Ascending aorta (tissue), 2 donors: ENCODE measurements at regions of chr14 and their contacts with region 1.

Region 1: GRCh38 chr14:100850841-100851585 is 25.1 kb downstream of the MEG3 start:
- DNase-seq: peak in 1 of 2 donors; percentile 80
- H3K4me3 ChIP-seq: no peak overlapping the region
- H3K27ac ChIP-seq: no peak overlapping the region
- H3K4me1 ChIP-seq: no peaks in the 10 kb centered on the region
- H3K27me3 ChIP-seq: no peaks in the 10 kb centered on the region
- CTCF ChIP-seq: peak; percentile 45 to 55 (median 45)

Region 2: DNA sequence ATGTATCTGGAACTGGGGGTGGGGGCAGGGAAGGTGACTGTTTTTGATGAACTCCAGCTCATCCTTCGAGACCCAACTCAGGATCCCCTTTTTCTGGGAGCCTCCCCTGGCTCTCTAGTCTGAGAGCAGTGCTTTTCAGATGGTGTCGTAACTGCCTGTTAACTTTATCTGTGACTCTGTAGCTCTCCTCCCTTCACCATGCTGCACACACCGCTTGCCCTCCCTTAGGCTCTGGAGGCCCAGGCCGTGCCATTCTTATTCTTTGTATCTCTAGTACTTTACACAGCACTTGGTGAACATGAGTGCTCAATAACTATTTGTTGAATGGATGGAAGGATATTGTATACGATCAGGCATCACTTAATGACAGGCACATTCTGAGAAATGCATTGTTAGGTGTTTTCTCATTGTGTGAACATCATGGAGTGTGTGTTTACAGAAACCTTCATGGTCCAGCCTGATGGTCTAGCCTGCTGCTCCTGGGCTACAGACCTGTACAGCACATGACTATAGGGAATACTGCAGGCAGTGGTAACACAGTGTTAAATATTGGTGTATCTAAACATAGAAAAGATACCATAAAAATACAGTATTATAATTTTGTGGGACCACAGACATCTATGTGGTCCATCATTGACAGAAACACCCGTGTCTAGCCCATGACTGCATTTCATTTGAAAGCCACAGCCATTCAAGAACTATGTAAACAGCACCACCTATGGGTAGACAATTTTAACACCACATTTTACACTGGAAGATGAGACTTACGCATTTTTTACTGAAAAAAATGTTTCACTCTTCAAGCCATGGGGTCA is 966.0 kb before region 1 on chr14:
- intact Hi-C with region 1: no loop called
- DNase-seq: no peak
- H3K4me3 ChIP-seq: no peak overlapping the region
- H3K27ac ChIP-seq: no peak overlapping the region
- H3K4me1 ChIP-seq: peaks cover 0 to 4% of the 10 kb centered on the region in 2 donors
- H3K27me3 ChIP-seq: no peaks in the 10 kb centered on the region
- CTCF ChIP-seq: peak; percentile 44 to 76 (median 63)

Region 3: DNA sequence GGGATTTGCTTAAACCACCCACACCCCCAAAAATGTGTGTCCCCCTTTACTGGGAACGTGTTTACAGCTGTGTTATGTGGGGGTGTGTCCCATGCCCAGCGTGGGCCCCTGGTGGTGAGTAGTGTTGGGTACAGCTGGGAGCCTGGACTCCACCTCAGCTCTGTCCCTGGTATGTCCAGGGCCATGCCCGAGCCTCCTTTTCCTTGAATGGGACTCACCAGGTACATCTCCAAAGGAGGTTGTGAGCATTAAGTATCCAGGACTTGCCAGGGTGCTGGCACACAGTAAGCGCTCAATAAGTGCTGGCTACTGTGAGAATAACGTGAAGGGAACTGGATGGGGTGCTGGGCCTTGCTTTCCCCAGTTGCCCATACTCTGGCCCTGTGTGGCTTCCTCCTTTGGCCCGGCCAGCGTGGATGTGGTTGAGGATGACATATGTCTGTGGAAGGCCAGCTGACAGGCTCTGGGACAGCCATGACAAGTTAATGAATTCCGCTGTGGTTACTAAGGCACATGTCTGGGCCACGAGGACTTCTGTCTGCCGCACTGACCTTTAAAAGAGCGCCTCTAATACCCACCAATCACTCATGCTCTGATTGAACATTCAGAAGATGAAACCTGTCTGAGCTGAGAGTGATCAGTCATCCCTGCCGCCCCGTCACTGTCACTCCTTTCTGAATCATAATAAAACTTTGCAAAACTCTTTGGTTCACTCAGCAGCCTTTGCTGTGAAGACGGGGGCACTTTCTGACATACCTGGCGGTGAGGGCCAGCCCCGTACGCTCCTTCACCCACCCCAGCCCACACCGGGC is 784.9 kb after region 1 on chr14:
- intact Hi-C with region 1: loop called (anchors 10 kb)
- DNase-seq: no peak
- H3K4me3 ChIP-seq: no peak overlapping the region
- H3K27ac ChIP-seq: no peak overlapping the region
- H3K4me1 ChIP-seq: no peaks in the 10 kb centered on the region
- H3K27me3 ChIP-seq: no peaks in the 10 kb centered on the region
- CTCF ChIP-seq: no peak